ENCODE measurements at regions of chr1 and their contacts with region 1.

Region 1: DNA sequence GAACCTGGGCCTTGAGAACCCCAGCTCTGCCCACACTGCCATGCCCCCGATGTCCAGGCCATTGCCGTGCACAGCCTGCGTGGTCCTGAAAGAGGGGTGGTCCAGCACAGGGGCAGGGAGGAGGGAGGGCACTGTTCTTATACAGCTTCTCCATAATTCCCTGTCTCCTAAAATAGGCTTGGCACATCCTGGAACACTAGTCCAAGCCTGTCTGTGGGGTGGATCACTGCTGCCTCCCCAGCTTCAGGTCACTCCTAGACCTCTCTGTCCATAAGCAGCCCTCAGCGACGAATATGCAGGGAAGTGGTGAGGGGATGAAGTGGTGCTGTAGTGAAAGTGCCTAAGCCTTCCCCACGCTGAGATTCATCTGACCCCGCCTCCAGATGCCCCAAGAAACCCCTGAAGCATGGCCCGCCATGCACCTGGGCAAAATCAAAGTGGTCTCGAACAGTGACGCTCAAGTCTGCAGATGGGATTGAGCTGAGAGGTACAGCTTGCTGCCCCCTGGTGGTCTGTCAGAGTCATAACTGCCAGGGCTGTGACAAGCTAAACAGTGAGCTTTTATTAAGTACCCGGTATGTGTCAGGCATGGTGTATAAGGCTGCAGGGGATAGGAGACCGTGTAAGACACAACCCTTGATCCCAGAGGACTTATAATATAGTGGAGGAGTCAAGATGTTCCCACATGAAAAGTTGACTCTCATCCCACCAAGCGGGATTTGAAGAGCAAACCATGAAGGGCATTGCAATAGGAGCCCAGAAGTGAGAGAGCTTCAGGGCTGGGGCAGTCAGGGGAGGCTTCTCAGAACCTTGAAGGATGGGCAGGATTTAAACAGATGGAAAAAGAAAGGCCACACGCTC is 66.6 kb downstream of the FAM163A start:
- DNase-seq: peak; percentile 64
- H3K4me3 Mint-ChIP-seq: no peak overlapping the region
- H3K27ac Mint-ChIP-seq: no peak overlapping the region
- H3K4me1 Mint-ChIP-seq: peaks cover 3% of the 10 kb centered on the region
- H3K27me3 Mint-ChIP-seq: peaks cover 3% of the 10 kb centered on the region

Region 2: DNA sequence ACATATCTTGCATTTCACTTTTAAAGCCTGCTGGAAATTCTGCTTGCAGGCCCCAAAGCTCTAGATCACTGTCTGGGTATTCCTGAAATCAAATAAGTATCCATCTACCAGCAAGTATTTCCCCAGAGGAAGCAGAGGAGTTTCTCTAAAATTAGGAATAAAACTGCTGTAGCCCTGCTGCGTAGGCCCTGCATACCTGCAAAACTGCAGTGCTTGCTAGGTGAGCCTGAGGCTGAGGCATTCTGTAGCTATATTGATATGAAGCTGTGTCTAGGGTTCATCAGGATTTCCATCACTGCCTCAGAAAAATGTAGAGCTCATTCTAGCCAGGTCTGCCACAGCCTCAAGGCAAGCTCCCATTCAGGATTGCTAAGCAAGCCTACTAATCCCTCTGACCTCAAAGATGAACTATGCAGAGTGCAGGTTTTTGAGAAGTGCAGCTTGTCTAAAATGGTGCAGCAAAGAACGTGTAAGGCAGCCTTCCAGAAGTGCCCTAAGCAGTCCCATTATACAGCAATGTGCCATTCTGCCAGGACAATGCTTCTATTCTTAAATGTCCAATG is 262.6 kb before region 1 on chr1:
- CTCF ChIA-PET with region 1: no interaction called
- POLR2A ChIA-PET with region 1: no interaction called
- DNase-seq: no peak
- H3K4me3 Mint-ChIP-seq: no peak overlapping the region
- H3K27ac Mint-ChIP-seq: no peak overlapping the region
- H3K4me1 Mint-ChIP-seq: no peaks in the 10 kb centered on the region
- H3K27me3 Mint-ChIP-seq: no peaks in the 10 kb centered on the region

Region 3: GRCh38 chr1:179661018-179661417 is 148.7 kb before region 1 on chr1:
- CTCF ChIA-PET with region 1: no interaction called
- POLR2A ChIA-PET with region 1: no interaction called
- DNase-seq: no peak
- H3K4me3 Mint-ChIP-seq: no peak overlapping the region
- H3K27ac Mint-ChIP-seq: no peak overlapping the region
- H3K4me1 Mint-ChIP-seq: peaks cover 2% of the 10 kb centered on the region
- H3K27me3 Mint-ChIP-seq: peaks cover 4% of the 10 kb centered on the region

Region 4: GRCh38 chr1:179706339-179706941 is 103.3 kb before region 1 on chr1:
- CTCF ChIA-PET with region 1: interaction called, 419 read pairs
- POLR2A ChIA-PET with region 1: interaction called, 7 read pairs
- DNase-seq: peak; percentile 58
- H3K4me3 Mint-ChIP-seq: no peak overlapping the region
- H3K27ac Mint-ChIP-seq: no peak overlapping the region
- H3K4me1 Mint-ChIP-seq: peaks cover 12% of the 10 kb centered on the region
- H3K27me3 Mint-ChIP-seq: peaks cover 2% of the 10 kb centered on the region

Region 5: DNA sequence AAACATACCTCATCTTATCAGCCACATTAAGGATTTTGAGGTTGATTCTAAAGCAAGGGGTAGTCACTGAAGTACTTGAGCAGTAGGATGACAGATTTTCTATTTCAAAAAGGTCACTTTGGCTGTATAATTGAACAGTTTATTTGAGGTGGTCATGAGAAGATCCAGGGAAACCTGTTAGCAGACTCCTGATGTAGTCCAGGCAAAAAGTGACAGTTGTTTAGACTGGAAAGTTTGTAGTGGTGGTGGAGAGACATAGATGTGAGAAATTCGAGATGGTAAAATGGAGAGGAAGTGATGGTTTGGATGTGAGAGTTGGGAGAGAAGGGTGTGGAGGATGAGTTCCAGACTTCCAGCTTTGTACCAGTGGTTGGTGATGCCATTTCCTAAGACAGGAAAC is 59.1 kb before region 1 on chr1:
- CTCF ChIA-PET with region 1: interaction called, 10 read pairs
- POLR2A ChIA-PET with region 1: no interaction called
- DNase-seq: no peak
- H3K4me3 Mint-ChIP-seq: no peak overlapping the region
- H3K27ac Mint-ChIP-seq: no peak overlapping the region
- H3K4me1 Mint-ChIP-seq: no peaks in the 10 kb centered on the region
- H3K27me3 Mint-ChIP-seq: peaks cover 48% of the 10 kb centered on the region

Region 6: GRCh38 chr1:179785031-179785431 is 24.7 kb before region 1 on chr1:
- CTCF ChIA-PET with region 1: interaction called, 21 read pairs
- POLR2A ChIA-PET with region 1: no interaction called
- DNase-seq: no peak
- H3K4me3 Mint-ChIP-seq: no peak overlapping the region
- H3K27ac Mint-ChIP-seq: no peak overlapping the region
- H3K4me1 Mint-ChIP-seq: no peaks in the 10 kb centered on the region
- H3K27me3 Mint-ChIP-seq: peaks cover 8% of the 10 kb centered on the region

Region 7: DNA sequence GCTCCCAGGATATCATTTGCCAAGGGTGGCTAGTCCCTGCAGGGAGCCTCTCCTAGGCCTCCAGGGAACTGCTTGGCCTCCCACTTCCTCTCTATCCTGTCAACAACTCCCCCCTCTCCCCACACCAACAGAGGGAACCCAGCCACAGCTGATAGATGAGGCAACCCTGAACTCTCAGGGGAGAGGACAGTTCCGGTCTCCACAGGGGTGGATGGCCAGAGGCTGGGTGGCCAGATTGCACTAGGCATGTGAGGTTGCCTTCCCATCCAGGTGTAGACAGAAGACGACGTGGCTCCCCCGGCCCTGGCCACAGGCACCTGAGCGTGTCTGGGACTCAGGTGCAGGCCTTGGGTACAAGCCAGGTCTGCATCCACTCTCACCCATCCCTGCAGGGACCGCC is 14.5 kb after region 1 on chr1:
- CTCF ChIA-PET with region 1: interaction called, 60 read pairs
- POLR2A ChIA-PET with region 1: no interaction called
- DNase-seq: peak; percentile 9
- H3K4me3 Mint-ChIP-seq: no peak overlapping the region
- H3K27ac Mint-ChIP-seq: no peak overlapping the region
- H3K4me1 Mint-ChIP-seq: no peaks in the 10 kb centered on the region
- H3K27me3 Mint-ChIP-seq: no peaks in the 10 kb centered on the region

Region 8: GRCh38 chr1:179840107-179840506 is 30.4 kb after region 1 on chr1:
- CTCF ChIA-PET with region 1: interaction called, 18 read pairs
- POLR2A ChIA-PET with region 1: no interaction called
- DNase-seq: no peak
- H3K4me3 Mint-ChIP-seq: no peak overlapping the region
- H3K27ac Mint-ChIP-seq: no peak overlapping the region
- H3K4me1 Mint-ChIP-seq: no peaks in the 10 kb centered on the region
- H3K27me3 Mint-ChIP-seq: no peaks in the 10 kb centered on the region

Region 9: GRCh38 chr1:180269761-180270527 is 460.2 kb after region 1 on chr1:
- CTCF ChIA-PET with region 1: no interaction called
- POLR2A ChIA-PET with region 1: no interaction called
- DNase-seq: no peak
- H3K4me3 Mint-ChIP-seq: no peak overlapping the region
- H3K27ac Mint-ChIP-seq: no peak overlapping the region
- H3K4me1 Mint-ChIP-seq: no peaks in the 10 kb centered on the region
- H3K27me3 Mint-ChIP-seq: peaks cover 1% of the 10 kb centered on the region